Heart right ventricle (tissue), 16 donors: ENCODE measurements at regions of chr16 and their contacts with region 1.

Region 1: DNA sequence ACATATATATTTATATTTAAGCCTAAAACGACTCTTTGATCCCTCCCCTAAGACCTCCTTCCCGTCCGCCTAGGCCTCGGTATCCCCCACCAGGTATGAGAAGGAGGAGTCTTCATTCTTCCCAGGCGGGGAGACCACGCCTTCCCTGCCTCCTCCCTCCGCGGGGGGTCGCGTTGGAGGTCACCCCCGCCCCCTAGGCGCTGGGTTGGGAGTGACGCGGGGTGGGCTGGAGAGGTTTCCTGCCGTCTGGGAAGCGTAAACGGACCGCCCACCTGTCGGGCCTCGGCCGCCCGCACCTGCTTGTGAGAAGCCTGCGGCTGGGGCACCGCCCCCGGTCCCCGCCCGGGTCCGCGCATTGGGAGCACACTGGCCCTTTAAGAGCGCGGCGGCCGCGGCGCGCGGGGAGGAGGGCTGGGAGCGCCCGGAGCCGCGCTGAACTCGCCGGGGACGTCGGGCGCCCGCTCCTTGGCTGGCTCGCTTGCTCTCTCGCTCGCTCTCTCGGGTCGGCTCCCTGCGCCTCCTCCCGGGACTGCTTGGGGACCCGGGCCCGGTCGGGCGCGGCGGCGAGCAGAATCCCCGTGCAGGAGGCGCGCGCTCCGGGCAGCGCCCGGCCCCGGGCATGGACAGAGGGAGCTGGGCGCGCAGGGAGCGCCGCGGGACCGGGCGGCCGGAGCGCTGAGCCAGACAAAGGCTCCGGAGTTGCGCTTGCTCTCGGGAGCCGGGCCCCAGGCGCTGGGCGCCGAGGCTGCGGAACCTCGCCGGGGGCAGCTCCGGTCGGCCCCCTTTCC is at the start of gene MMP15:
- DNase-seq: peak; percentile 76 to 80
- ATAC-seq: peak; percentile 50 to 72 (median 61)
- H3K4me3 ChIP-seq: peak within 1 kb of the TSS; percentile 60 to 95 (median 89)
- H3K27ac ChIP-seq: peak within 1 kb of the TSS; percentile 72 to 99 (median 94)
- H3K4me1 ChIP-seq: peaks cover 33 to 93% (median 77%) of the 10 kb centered on the region in 9 donors
- H3K27me3 ChIP-seq: peaks cover 0 to 43% (median 0%) of the 10 kb centered on the region in 7 donors
- CTCF ChIP-seq: no peak
- total RNA-seq, gene MMP15: 38.2 to 88.4 (median 59.3) TPM

Region 2: DNA sequence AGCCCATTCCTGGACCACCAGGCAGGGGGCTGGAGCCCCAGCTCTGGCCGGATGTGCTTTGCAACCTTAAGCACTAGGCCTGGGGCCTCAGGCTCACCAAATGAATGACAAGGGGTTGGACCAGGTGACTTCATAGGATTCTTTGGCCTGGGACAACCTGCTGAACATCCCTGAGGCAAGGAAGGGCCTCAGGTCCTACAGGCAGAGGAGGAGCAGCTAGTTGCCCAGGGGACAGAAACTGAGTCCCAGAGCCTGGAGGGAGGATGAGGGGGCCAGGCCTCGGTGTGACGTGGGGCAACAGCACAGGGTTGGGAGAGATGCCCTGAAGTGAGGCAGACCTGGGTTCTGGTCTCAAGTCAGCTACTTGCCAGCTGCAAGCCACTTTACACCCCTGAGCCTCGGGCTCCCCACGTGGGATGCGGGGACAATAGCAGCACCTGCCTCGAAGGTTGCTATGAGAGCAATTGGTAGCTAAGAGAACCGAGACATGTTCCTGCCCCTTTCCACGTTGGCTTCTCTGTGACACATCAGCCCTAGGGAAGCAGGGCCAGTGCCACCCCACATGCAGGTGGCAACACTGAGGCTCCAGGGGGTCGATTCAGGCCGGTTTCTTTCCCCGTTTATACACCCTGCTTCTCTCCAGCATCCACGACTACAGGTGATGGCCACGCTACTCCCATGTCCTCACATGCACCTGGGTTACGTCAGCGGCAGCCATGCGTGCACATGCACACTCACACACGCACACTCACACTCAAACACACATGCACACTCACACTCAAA is 61.1 kb after region 1 on chr16:
- intact Hi-C with region 1: loop called in 2 of 10 experiments (anchors 2 to 5 kb)
- DNase-seq: no peak
- ATAC-seq: no peak
- H3K4me3 ChIP-seq: no peak overlapping the region
- H3K27ac ChIP-seq: no peak overlapping the region
- H3K4me1 ChIP-seq: peaks cover 0 to 18% (median 4%) of the 10 kb centered on the region in 9 donors
- H3K27me3 ChIP-seq: no peaks in the 10 kb centered on the region
- CTCF ChIP-seq: no peak

Region 3: GRCh38 chr16:58121132-58121531 is 95.6 kb after region 1 on chr16:
- intact Hi-C with region 1: loop called (anchors 1 to 5 kb)
- DNase-seq: no peak
- ATAC-seq: no peak
- H3K4me3 ChIP-seq: peak overlapping the region in 1 of 10 donors; percentile 7
- H3K27ac ChIP-seq: peak overlapping the region in 8 of 10 donors; percentile 37 to 74 (median 60)
- H3K4me1 ChIP-seq: peaks cover 29 to 99% (median 78%) of the 10 kb centered on the region in 9 donors
- H3K27me3 ChIP-seq: no peaks in the 10 kb centered on the region
- CTCF ChIP-seq: no peak

Region 4: DNA sequence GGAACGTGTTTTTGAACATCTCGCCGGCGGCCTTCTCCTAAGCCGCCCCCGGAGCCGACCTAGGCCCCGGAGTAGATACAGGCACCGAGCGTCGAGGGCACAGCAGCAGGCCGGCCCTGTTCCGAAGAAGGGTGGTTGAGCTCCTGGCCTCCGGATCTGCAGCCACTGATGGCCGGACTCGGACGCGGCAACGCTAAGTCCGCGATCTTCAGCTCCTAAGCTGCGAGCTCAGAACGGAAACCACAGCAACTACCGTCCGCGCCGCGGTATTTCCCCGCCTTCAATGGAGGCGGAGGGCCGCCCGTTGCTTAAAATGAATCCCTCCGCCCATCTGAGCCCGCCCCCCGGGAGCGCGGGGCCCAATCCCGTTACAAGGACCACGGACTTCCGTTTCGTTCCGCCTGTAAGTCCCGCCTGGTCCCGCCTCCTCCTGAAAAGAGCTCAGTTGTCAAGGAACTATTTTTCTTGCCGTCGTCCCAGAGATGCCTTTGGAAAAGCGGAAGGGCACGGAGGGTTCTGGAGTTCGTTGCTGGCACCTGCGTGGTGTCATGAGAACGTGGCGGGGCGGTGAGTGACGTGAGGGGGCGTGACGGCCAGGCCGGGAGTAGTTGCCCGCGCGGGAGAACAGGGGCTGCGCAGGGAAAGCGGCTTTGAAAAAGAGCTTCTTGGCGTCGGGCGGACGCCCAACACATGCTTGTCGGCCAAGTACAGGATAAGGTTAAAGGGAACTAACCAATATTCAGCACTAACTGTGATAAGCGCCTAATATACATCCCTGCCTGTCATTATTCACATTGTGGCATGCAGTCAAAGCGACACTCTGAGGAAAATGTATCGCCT is 103.8 kb after region 1 on chr16 and contains the start of gene CFAP20:
- intact Hi-C with region 1: loop called in 2 of 10 experiments (anchors 2 to 5 kb)
- DNase-seq: peak; percentile 98 to 99
- ATAC-seq: peak; percentile 97 to 98 (median 97)
- H3K4me3 ChIP-seq: peak within 1 kb of the TSS; percentile 71 to 95 (median 92)
- H3K27ac ChIP-seq: peak within 1 kb of the TSS; percentile 52 to 95 (median 90)
- H3K4me1 ChIP-seq: peaks cover 14 to 48% (median 43%) of the 10 kb centered on the region in 9 donors
- H3K27me3 ChIP-seq: no peaks in the 10 kb centered on the region
- CTCF ChIP-seq: peak in 1 of 9 donors; percentile 6
- total RNA-seq, gene CFAP20: 27.8 to 41.8 (median 34.7) TPM

Region 5: DNA sequence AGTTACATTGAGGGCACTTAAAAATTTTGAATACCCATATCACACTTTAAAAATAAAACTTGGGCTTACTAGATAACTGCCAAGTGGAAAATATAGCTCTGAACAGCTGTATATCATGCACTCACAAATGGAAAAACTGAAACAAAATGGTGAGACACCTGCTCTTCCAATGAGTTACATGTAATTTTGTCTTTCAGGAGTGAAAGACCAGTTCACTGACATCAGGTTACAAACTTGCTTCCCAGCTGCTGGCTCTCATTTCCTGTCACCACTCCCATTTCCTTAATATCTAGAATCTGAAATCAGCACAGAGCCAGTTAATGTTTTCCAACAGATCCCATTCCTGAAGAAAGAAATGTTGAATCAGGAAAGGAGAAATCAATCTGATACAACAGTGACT is 161.5 kb after region 1 on chr16:
- intact Hi-C with region 1: loop called in 5 of 10 experiments (anchors 10 kb)
- DNase-seq: no peak
- ATAC-seq: peak in 2 of 8 donors; percentile 22 to 24
- H3K4me3 ChIP-seq: no peak overlapping the region
- H3K27ac ChIP-seq: peak overlapping the region in 5 of 10 donors; percentile 0 to 60 (median 53)
- H3K4me1 ChIP-seq: peaks cover 0 to 33% (median 18%) of the 10 kb centered on the region in 9 donors
- H3K27me3 ChIP-seq: no peaks in the 10 kb centered on the region
- CTCF ChIP-seq: no peak

Region 6: DNA sequence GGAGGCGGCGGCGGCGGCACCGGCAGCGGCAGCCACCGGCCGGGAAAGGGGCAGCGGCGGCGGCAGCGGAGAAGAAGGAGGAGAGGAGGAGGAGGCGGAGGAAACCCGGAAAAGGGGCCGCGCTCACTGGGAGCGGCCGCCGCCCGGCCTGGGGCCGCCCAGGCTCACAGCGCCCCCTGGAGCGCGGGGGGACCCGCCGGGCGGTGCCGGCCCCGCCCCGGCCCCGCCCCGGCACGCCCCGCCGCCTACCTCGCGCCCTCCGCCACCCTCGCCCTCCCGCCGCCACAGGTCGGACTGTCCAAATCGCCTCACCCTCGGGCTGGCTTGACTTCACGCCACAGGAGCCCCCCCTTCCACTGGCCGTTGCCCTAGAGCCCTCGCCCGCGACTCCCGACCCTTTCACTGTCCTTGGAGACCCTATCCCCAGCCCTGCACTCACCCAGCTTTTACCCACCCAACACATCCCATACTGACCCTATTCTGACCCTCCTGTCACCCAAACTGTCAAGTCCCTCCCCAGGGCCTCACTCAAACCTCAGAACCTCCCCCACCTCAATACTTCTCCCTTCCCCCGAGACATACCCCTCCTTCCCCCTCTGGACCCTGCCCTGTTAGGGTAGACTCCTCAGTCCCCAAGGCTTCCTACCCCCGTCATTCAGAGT is 172.6 kb after region 1 on chr16 and contains the start of gene CSNK2A2:
- intact Hi-C with region 1: loop called in 6 of 10 experiments (anchors 2 to 10 kb)
- DNase-seq: peak; percentile 70 to 77
- ATAC-seq: peak; percentile 89 to 97 (median 91)
- H3K4me3 ChIP-seq: peak within 1 kb of the TSS; percentile 75 to 92 (median 86)
- H3K27ac ChIP-seq: peak within 1 kb of the TSS in 9 of 10 donors; percentile 21 to 78 (median 66)
- H3K4me1 ChIP-seq: peaks cover 0 to 29% (median 21%) of the 10 kb centered on the region in 9 donors
- H3K27me3 ChIP-seq: peaks cover 0 to 14% (median 0%) of the 10 kb centered on the region in 7 donors
- CTCF ChIP-seq: peak; percentile 14 to 67 (median 39)
- total RNA-seq, gene CSNK2A2: 27.0 to 48.3 (median 37.8) TPM